Pancreas (tissue), 10 donors: ENCODE measurements at regions of chr11 and their contacts with region 1.

Region 1: DNA sequence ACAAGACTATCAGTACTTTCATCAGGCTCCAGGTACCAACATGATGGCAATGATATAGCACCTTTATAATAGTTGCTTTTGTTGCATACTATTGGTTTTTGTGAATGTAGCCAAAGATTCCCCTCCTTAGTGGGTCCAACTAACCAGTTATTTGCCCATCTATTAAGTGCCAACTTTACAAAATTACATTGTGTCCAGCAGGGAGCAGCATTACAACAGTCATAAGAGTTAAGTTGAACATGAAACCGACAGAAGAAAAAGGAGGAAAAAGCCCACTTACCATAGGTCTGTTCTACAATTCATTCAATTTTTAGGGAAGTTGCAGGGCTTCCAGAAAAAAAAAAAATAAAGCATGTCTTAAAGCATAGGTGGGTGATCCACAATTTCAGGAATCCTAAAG is 21.6 kb downstream of the IMMP1L start:
- DNase-seq: peak in 1 of 6 donors; percentile 16
- ATAC-seq: peak in 3 of 4 donors; percentile 70 to 73 (median 72)
- H3K4me3 ChIP-seq: no peak overlapping the region
- H3K27ac ChIP-seq: no peak overlapping the region
- H3K4me1 ChIP-seq: peaks cover 0 to 10% (median 8%) of the 10 kb centered on the region in 3 donors
- H3K27me3 ChIP-seq: no peaks in the 10 kb centered on the region
- CTCF ChIP-seq: peak in 3 of 4 donors; percentile 21 to 30 (median 26)

Region 2: GRCh38 chr11:31542862-31543261 is 55.0 kb after region 1 on chr11:
- intact Hi-C with region 1: no loop called
- DNase-seq: no peak
- ATAC-seq: no peak
- H3K4me3 ChIP-seq: no peak overlapping the region
- H3K27ac ChIP-seq: no peak overlapping the region
- H3K4me1 ChIP-seq: no peaks in the 10 kb centered on the region
- H3K27me3 ChIP-seq: no peaks in the 10 kb centered on the region
- CTCF ChIP-seq: no peak

Region 3: DNA sequence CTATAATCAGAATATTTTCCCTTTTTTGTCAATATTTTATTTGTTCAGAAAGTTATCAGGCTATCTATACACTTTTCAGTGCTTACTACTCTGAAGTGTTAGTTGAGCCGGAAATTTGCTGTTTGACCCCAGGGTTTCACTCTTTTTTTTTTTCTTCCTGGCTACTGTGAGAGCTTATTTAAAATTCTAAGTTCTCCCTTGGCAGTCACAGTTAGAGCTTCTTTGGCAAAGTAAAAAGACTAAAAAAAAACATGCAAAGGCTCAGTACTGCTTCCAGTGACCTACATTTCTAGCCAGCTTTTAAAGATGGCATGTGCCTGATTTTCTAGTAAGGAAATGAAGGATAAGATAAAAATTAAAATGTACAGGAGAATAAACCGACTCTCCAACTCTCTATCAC is 70.2 kb after region 1 on chr11:
- intact Hi-C with region 1: no loop called
- DNase-seq: no peak
- ATAC-seq: no peak
- H3K4me3 ChIP-seq: no peak overlapping the region
- H3K27ac ChIP-seq: no peak overlapping the region
- H3K4me1 ChIP-seq: peaks cover 0 to 12% (median 11%) of the 10 kb centered on the region in 3 donors
- H3K27me3 ChIP-seq: no peaks in the 10 kb centered on the region
- CTCF ChIP-seq: no peak

Region 4: DNA sequence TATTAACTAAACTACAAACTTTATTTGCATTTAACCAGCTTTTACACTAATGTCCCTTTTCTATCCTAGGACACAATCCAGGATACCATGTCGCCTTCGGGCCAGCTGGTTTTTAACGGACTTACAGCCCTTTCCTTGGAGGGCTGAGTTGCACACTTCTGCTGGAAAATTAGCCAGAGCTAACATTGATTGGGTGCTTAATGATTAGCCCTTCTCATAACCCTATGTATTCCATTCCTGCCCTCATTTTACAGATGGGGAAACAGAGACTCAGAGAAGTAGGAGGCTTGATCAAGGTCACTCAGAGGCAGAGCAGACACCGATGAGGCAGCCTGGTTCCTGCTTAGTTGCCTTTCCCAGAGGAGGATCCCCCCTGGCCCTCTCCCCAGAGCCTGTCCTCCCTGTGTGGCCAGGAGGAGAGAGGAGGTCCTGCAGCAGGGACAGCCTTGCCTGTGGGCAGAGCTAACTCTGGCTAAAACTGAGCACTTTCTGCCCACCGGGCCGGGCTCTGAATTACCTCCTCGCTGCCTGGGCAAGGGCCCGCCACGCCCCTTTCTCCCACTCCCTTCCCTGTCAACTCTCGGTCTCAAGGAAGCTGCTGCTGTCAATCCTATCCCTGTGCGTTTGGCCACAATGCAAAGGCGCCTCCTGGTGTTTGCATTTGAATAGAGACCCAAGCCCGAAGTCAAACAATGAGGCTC is 382.9 kb after region 1 on chr11:
- intact Hi-C with region 1: loop called in 1 of 3 experiments (anchors 5 kb)
- DNase-seq: peak; percentile 27 to 67 (median 48)
- ATAC-seq: peak; percentile 76 to 88 (median 86)
- H3K4me3 ChIP-seq: no peak overlapping the region
- H3K27ac ChIP-seq: no peak overlapping the region
- H3K4me1 ChIP-seq: no peaks in the 10 kb centered on the region
- H3K27me3 ChIP-seq: no peaks in the 10 kb centered on the region
- CTCF ChIP-seq: peak; percentile 20 to 53 (median 50)